OCI-LY7 (cell line): ENCODE measurements at regions of chr2 and their contacts with region 1.

Region 1: GRCh38 chr2:15159751-15160177 is 401.4 kb downstream of the NBAS start:
- DNase-seq: peak; percentile 60
- H3K4me3 ChIP-seq: no peak overlapping the region
- H3K27ac ChIP-seq: no peak overlapping the region
- H3K4me1 ChIP-seq: peaks cover 7% of the 10 kb centered on the region
- CTCF ChIP-seq: peak; percentile 86

Region 2: DNA sequence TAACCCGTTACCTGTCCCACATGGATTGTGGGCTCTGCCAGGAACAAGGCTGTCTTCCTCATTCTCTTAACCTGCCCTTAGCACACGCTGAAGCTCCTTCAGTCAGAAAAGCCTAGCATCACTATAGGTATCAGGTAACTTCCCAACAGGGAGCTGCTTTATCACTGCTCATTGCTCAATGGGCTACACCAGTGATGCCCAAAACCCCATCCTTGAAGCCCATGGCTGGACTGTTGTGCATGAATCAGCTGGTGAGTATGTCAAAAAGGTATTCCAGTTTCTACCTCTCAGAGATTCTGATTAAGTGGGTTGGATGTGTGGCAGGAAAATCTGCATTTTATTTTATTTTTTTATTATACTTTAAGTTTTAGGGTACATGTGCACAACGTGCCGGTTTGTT is 165.0 kb before region 1 on chr2:
- CTCF ChIA-PET with region 1: no interaction called
- POLR2A ChIA-PET with region 1: no interaction called
- intact Hi-C with region 1: loop called (anchors 5 kb)
- DNase-seq: no peak
- H3K4me3 ChIP-seq: no peak overlapping the region
- H3K27ac ChIP-seq: no peak overlapping the region
- H3K4me1 ChIP-seq: no peaks in the 10 kb centered on the region
- CTCF ChIP-seq: no peak

Region 3: DNA sequence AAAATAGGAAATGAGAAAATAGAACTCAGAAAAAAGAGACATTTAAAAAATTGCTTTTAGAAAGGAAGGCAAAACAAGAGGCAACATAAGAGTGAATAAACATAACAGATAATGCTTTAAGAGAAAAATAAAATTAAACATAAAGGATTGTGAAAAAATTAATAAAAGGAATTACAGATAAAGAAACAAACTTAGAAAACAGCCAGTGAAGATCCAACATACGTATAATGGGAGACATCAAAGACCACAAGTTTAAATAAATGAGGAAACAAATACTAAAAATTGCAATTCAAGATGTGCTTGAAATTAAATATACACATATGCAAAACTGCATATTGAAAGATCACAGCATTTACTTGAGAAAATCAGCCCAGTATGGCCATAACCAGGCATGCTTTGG is 47.5 kb before region 1 on chr2:
- CTCF ChIA-PET with region 1: no interaction called
- POLR2A ChIA-PET with region 1: no interaction called
- intact Hi-C with region 1: no loop called
- DNase-seq: peak; percentile 34
- H3K4me3 ChIP-seq: no peak overlapping the region
- H3K27ac ChIP-seq: no peak overlapping the region
- H3K4me1 ChIP-seq: no peaks in the 10 kb centered on the region
- CTCF ChIP-seq: no peak

Region 4: DNA sequence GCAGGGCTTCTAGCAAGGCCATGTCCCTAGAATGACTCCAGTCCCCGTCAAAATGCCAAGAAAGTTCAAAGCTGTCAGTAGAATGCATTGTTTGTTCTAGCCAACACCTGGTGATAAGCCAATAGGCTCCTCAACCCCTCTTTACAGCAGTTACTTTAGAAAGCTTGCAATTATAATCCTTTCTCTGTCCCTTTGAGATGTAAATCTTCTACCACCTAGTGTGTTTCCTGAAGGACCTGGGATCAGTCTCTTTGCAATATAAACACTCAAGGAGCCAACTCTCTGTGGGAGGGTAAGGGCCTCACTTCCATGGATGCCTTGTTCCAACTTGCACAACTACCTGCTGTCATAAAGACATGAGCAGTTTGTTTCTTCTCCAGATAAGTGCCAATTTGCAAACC is 99.6 kb after region 1 on chr2:
- CTCF ChIA-PET with region 1: no interaction called
- POLR2A ChIA-PET with region 1: no interaction called
- intact Hi-C with region 1: no loop called
- DNase-seq: no peak
- H3K4me3 ChIP-seq: no peak overlapping the region
- H3K27ac ChIP-seq: no peak overlapping the region
- H3K4me1 ChIP-seq: no peaks in the 10 kb centered on the region
- CTCF ChIP-seq: no peak